Dorsolateral prefrontal cortex (tissue), 120 donors: ENCODE measurements at regions of chr3 and their contacts with region 1.

Region 1: GRCh38 chr3:4343258-4343657 is 40.1 kb downstream of the SETMAR start:
- DNase-seq: no peak
- H3K4me3 ChIP-seq: no peak overlapping the region
- H3K27ac ChIP-seq: peak overlapping the region in 15 of 59 donors; percentile 1 to 85 (median 39)
- H3K27me3 ChIP-seq: no peaks in the 10 kb centered on the region
- CTCF ChIP-seq: no peak

Region 2: DNA sequence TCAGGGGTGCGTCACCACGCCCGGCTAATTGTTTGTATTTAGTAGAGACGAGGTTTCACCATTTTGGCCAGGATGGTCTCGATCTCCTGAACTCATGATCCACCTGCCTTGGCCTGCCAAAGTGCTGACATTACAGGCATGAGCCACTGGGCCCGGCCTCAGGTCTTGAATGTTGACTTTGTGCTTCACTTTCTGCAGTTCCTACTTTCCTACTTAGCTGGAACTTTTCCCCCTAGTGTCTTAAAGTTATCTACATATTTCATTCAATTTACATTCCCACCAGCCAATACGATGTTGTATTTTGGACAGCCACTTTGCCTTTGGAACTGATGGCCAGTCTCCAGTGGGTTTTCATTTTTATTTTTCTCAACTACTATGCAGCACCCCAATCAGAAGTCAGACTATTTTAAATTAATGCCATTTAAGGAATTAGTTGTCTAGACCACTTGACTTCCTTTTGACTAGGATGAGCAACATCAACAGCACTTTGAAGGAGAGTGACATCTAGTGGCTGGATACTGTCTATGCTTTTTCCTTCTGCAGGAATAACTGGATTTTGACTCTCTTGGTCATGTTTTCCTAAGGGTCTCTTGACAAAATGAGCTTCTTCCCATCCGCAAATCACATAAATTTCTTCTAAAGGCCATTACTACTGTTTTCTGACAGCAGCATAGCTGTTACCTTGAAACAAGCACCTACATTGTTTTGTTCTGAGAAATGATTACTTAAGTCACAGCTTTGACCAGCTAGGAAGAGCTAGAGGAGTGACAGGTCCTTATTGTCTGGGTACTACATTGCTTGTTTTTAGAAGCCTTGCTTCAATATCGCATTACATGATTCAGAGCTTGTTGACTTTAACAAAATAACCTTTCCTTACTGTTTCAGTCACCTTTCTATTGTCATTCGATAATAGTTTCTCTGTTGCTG is 290.1 kb after region 1 on chr3:
- intact Hi-C with region 1: loop called in 1 of 2 experiments (anchors 2 kb)
- DNase-seq: no peak
- H3K4me3 ChIP-seq: no peak overlapping the region
- H3K27ac ChIP-seq: no peak overlapping the region
- H3K27me3 ChIP-seq: no peaks in the 10 kb centered on the region
- CTCF ChIP-seq: peak; percentile 65 to 93 (median 84)